ENCODE measurements at regions of chr9 and their contacts with region 1.

Region 1: GRCh38 chr9:137254624-137255447 is at the start of gene NELFB:
- DNase-seq: peak; percentile 81
- H3K4me3 ChIP-seq: peak within 1 kb of the TSS; percentile 70 to 99 (median 98)
- H3K27ac ChIP-seq: peak within 1 kb of the TSS; percentile 29
- H3K4me1 ChIP-seq: peaks cover 21% of the 10 kb centered on the region
- H3K27me3 ChIP-seq: no peaks in the 10 kb centered on the region
- CTCF ChIP-seq: no peak
- total RNA-seq, gene NELFB: 39.5 to 54.9 TPM

Region 2: GRCh38 chr9:137243626-137244485 is 11.0 kb before region 1 on chr9:
- CTCF ChIA-PET with region 1: no interaction called
- dilution Hi-C with region 1: no loop called
- in situ Hi-C with region 1: no loop called
- intact Hi-C with region 1: loop called (anchors 1 kb)
- DNase-seq: no peak
- H3K4me3 ChIP-seq: no peak overlapping the region
- H3K27ac ChIP-seq: no peak overlapping the region
- H3K4me1 ChIP-seq: peaks cover 18% of the 10 kb centered on the region
- H3K27me3 ChIP-seq: no peaks in the 10 kb centered on the region
- CTCF ChIP-seq: no peak

Measured in mammary epithelial cell (primary cell).